ENCODE measurements at regions of chr3 and their contacts with region 1.

Region 1: DNA sequence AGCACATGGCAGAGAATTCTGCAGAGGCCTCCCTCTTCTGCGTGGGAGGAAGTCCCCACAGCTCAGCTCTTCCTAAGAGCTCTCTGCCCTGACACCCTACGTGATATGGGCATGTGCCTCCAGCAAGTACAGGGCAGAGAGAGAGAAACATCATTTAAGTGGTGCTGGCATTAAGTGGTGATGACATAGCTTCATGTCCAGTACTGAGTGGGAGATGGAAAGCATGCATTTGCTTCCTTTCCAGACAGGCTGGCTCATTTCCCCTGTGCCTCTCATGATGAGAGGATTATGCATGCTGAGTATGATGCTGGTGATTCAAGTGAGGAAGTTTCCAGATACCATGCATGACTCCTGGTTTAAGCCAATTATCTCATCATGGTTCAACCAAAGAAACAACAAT is 26.9 kb downstream of the BFSP2 start:
- DNase-seq: no peak
- H3K4me3 ChIP-seq: no peak overlapping the region
- H3K27ac ChIP-seq: no peak overlapping the region
- H3K4me1 ChIP-seq: peaks cover 3 to 12% of the 10 kb centered on the region in 2 experiments; a peak in 2 of 4 replicates
- H3K27me3 ChIP-seq: no peaks in the 10 kb centered on the region
- CTCF ChIP-seq: no peak
- EP300 ChIP-seq: no peak
- RAD21 ChIP-seq: no peak

Region 2: DNA sequence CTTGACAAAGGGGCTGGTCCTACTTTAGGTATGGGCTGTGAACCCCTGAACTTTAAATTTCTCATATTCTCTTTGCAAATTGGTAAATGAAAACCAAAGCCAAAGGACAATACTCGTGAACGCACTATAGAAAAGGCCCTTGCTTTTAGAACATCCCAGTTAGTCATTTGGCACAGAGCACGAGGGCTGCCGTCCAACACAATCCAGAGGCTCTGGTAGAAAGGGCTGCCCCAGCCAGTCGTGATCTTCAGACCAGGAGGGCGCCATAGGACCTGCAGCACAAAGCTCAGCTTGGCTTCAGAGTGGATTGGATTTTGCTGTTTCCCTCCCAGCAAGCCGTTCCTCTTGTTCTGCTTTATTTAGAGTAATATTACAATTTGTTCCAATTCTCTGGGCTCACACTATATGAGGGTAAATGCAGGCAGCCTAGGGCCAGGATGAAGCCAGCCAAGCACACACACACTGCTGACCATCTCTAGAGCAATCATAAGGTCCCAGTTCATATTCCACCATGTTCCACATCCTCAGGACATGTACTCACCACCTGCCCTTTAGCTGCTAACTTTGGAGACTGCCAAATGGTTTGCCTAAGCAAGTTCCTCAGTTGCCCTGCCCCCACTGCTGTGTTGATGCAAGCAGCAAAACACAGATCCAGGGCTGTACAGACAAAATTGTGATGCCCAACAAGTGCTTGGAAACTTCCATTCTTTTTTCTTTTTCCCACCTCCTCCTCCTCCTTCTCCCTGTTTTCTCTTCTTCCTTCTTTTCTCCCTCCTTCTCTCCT is 32.8 kb before region 1 on chr3:
- CTCF ChIA-PET with region 1: interaction called, 34 read pairs
- POLR2A ChIA-PET with region 1: no interaction called
- DNase-seq: no peak
- H3K4me3 ChIP-seq: no peak overlapping the region
- H3K27ac ChIP-seq: no peak overlapping the region
- H3K4me1 ChIP-seq: peaks cover 4 to 5% of the 10 kb centered on the region in 2 experiments; a peak in 2 of 4 replicates
- H3K27me3 ChIP-seq: no peaks in the 10 kb centered on the region
- CTCF ChIP-seq: no peak
- EP300 ChIP-seq: no peak
- RAD21 ChIP-seq: no peak